Left cardiac atrium (tissue), 4 donors: ENCODE measurements at regions of chr1 and their contacts with region 1.

Region 1: GRCh38 chr1:27603681-27604578 is at the start of gene AHDC1:
- DNase-seq: peak; percentile 94
- ATAC-seq: peak; percentile 73 to 74
- total RNA-seq, gene AHDC1: 37.6 to 39.1 TPM

Region 2: DNA sequence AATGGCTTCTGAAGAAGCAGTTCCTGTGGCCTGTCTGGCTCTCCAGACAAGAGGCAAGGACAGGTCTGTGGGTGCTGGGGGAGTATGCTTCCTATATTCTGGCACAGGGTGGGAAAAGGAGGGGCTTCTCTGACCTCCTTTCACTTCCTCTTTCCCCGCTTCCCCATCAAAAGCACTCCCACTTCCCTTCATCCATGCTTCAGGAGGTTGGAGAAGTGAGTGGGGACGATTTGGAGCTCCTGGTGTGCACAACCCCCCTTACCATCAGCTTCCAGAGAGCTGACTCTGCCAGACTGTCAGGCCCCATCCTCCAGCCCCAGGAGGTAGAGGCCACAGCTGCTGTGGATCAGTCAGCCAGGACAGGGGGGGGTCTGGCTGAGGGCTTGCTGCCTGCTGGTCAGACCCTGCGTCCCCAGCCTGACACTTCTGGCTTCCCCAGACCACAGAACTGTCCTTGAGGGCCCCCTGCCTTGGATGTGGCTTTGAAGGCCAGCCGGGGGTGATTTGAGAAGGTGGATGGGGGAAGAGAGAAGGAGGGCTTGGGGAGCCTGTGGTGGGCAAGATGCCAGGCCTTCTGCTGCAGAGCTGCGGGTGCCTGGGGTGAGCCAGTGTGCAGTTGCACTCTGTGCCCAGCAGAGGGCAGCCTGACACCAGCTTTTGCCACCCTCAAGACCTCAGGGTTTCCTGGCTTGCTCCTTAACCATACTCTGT is 303.4 kb before region 1 on chr1:
- intact Hi-C with region 1: loop called in 1 of 2 experiments (anchors 2 kb)
- DNase-seq: peak; percentile 83
- ATAC-seq: peak; percentile 84 to 87

Region 3: DNA sequence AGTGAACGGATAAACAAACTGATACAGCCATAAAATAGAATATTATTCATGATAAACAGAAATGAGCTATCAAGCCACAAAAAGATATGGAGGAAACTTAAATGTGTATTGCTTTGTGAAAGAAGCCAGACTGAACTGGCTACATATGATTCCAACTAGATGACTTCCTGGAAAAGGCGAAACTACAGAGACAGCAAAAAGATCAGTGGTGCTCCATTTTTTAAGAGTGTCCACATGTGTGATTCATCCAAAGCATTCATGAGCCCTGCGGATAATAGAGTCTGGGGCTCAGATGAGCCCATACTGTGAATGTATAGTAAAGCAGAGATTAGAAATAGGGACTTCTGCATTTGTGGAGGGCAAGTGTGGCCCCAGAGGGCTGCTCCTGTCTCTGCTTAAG is 289.8 kb before region 1 on chr1:
- intact Hi-C with region 1: no loop called
- DNase-seq: no peak
- ATAC-seq: no peak

Region 4: GRCh38 chr1:27392096-27392777 is 211.7 kb before region 1 on chr1 and contains the start of gene GPR3:
- intact Hi-C with region 1: loop called in 1 of 2 experiments (anchors 2 kb)
- DNase-seq: peak; percentile 95
- ATAC-seq: peak; percentile 94
- total RNA-seq, gene GPR3: 1.7 to 12.4 TPM

Region 5: DNA sequence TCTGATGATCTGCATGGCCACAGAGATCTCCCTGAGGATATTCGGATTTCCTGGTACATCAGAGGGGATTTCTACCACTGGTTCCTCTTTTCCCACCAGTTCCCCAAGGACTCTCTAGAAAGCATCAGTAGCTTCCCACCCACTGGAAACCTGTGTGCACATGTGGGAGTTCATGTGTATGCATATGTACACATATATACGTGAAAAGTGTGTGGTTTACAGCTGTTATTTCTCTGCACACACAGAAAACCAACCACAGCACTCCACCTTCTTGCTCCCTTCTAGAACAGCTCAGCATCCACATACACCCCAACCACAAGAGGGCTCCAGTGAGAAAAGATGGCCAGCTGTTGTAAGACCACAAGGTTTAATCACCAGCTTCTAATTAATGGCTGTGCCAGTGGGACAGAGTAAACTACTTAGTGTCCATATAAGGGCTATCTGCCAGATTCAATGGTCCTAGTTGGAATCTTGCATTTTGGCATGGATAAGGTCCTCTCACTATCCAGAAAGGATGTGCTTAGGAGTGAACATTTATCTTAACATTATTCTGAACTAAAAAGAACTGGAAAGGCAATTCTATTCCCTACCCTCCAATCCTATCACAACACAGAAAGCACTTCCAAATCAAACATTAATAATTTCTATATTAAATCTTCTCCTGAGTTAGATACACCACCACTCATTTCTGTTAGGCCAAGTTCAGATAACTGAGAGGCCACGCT is 187.4 kb before region 1 on chr1:
- intact Hi-C with region 1: loop called in 1 of 2 experiments (anchors 5 kb)
- DNase-seq: no peak
- ATAC-seq: peak in 1 of 2 donors; percentile 45

Region 6: DNA sequence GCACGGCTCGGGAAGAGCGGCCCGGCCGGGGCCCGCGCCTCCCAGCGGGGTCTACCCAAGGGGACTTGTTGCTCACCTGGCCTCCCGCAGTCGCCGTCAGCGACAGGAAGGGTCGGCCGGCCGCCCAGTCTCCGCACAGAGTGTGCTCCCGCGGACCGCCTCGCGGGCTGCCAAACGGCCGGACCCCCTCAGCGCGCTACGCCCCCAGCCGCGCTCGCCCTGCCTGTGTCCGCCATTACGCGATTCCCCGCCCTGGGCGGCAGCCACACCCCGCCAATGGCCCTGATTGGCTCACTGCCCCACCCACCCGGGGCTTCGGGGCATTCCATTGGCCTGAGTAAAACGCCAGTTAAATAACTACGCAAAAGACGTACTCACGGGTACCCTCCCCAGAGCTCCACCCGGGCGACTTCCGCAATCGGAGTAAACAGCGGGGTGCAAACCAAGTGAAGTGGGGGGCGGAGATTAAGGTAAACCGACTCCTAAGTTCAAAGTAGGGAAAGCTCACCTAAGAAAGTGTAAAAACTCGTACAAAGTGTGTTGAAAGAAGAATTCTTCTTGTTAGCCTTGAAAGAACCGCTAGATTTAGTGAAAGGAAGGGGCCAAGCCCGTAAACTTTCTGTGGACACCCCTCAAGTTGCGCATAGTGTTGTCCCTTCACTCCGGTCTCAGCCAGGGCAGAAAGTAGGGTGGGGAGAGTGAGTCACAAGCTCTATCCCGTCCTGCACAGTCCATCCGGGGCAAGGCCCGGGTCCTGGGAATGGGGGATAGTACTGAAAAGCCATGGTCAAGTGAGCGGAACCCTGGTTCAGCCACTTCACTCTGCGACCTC is 113.8 kb before region 1 on chr1 and contains the start of gene WASF2:
- intact Hi-C with region 1: loop called in 1 of 2 experiments (anchors 10 kb)
- DNase-seq: peak; percentile 97
- ATAC-seq: peak; percentile 95 to 96
- total RNA-seq, gene WASF2: 71.8 to 77.4 TPM

Region 7: GRCh38 chr1:27556781-27557595 is 46.9 kb before region 1 on chr1:
- intact Hi-C with region 1: loop called in 1 of 2 experiments (anchors 5 kb)
- DNase-seq: peak; percentile 96
- ATAC-seq: peak; percentile 71 to 79

Region 8: DNA sequence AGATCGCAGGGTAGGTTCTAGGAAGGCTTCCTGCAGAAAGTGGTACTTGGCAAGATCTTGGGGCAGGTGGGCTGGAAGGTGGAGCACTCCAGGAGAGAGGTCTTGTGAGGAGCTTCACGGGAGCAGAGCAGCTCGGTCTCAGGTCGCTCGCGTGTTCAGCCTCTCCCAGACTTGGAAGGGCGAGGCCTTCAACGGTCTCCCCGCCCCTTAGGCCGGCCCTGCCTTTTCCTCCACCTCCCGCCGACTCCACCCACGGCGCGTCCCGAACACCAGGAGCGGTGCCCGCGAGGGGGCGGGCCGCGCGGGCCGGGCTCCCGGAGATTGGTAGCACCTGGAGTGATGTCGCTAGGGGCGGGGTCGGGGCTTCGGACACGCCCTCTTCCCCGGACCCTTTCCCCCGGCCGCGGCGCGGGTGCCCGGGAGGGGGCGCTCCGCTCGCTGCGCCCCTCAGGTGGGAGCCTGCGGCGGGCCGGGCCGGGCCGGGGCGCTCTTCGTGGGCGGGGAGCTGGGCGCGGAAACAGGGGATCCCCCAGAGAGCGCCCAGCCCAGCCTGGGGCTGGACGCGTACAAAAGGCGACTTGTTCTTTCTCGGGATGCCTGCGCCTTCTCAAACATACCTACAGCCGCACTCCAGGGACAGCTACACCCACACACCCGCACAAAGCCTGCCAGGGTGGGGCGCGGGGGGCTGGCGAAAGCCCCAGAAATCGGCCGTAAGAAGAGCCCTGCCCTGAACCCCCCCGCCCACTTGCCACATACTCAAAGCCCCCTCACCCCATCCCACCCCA is 35.4 kb before region 1 on chr1:
- intact Hi-C with region 1: loop called in 1 of 2 experiments (anchors 2 kb)
- DNase-seq: peak; percentile 96
- ATAC-seq: peak; percentile 82 to 86

Region 9: DNA sequence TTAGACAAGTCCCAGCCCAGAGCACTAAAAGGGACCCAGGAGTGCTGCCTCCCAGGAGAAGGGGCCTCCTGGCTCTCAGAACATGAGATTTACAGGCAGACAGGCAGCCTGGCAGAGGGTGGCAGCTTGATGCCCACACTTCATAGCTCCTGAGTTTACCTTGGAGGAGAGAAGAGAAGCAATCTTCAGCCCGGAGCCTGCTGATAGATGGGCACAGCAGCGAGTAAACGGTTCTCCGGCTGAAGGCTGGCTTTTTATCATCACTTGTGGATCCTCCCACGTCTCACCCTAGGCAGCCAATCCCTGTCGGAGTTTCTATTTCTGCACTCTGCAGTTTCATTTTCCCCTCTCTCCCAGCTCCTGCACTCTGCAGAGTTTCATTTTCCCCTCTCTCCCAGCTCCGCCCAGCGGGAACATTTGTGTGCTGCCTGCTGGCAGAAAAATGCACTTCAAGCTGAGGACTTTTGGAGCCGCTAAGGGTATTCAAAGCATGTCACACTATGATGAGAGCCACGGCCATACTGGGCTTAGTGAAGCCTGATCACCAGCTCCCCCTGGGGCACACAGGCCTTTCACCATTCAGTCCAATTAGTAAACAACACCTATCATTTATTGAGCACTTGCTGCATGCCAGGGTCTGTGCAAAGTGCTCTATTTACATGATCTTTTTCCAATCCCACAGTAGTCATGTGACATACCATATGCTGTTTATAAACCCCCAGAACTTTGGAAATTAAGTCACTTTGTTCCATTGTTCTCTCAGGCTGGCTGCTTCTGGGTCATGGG is 68.2 kb after region 1 on chr1 and contains the start of gene IFI6:
- intact Hi-C with region 1: no loop called
- DNase-seq: peak; percentile 88
- ATAC-seq: peak; percentile 98
- total RNA-seq, gene IFI6: 40.6 to 143 TPM

Region 10: GRCh38 chr1:27689423-27690173 is 85.7 kb after region 1 on chr1:
- intact Hi-C with region 1: no loop called
- DNase-seq: no peak
- ATAC-seq: peak; percentile 35 to 73